ENCODE measurements at regions of chr12 and their contacts with region 1.

Region 1: GRCh38 chr12:51262758-51263177 is 7.4 kb downstream of the SMAGP start:
- DNase-seq: no peak
- ATAC-seq: peak; percentile 70
- H3K4me3 ChIP-seq: no peak overlapping the region
- H3K27ac ChIP-seq: no peak overlapping the region
- H3K4me1 ChIP-seq: no peaks in the 10 kb centered on the region
- H3K27me3 ChIP-seq: no peaks in the 10 kb centered on the region
- CTCF ChIP-seq: peak; percentile 32 to 50 (median 40); a peak in 4 of 6 replicates
- EP300 ChIP-seq: no peak
- POLR2A ChIP-seq: no peak
- RAD21 ChIP-seq: 0 out of 2 replicates have a peak, but pooled peaks have one; percentile 6

Region 2: DNA sequence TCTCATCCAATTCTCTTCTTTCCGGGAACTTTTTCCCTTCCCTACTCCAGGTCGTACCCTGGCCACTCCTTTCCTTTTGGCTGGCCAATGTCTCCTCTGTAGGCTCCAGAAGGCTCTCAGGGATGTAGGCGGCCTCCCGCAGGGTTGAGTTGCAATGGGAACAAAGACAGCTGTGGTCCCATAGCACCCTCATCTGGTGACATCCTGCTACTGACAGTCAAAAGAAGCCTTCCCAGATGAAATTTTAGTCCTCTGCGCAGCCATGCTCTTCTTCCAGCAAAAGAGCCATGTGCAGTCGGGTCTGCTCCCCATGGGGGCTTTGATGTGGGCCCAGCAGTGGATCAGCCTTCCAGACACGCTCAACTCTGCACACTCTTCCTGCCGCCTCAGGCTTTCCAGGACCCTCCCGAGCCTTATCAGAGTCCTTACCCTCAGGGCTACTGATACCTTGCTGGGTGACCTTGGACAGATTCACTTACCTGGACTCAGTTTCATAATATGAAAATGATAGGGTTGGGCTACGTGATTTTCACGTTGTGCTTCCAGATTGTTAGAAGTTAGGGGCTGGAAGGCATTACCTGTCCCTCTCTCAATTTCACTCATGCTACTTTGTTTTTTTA is 89.3 kb after region 1 on chr12:
- CTCF ChIA-PET with region 1: interaction called, 10 read pairs
- POLR2A ChIA-PET with region 1: no interaction called
- RAD21 ChIA-PET with region 1: interaction called, 3 read pairs
- SMC1A ChIA-PET with region 1: no interaction called
- in situ Hi-C with region 1: no loop called
- intact Hi-C with region 1: no loop called
- DNase-seq: no peak
- ATAC-seq: peak; percentile 60; the same call in 2 of the 3 replicates
- H3K4me3 ChIP-seq: no peak overlapping the region
- H3K27ac ChIP-seq: no peak overlapping the region
- H3K4me1 ChIP-seq: peaks cover 3% of the 10 kb centered on the region
- H3K27me3 ChIP-seq: no peaks in the 10 kb centered on the region
- CTCF ChIP-seq: peak; percentile 50 to 64 (median 64); a peak in 5 of 6 replicates
- EP300 ChIP-seq: no peak
- POLR2A ChIP-seq: no peak
- RAD21 ChIP-seq: peak; percentile 66

Measured in GM12878 (cell line).